Ovary (tissue), 10 donors: ENCODE measurements at regions of chr2 and their contacts with region 1.

Region 1: GRCh38 chr2:100104718-100105677 is 37.4 kb downstream of the AFF3 start:
- DNase-seq: peak; percentile 31 to 68 (median 50)
- H3K4me3 ChIP-seq: peak overlapping the region; percentile 73
- H3K27ac ChIP-seq: peak overlapping the region; percentile 67 to 71
- H3K4me1 ChIP-seq: peaks cover 7% of the 10 kb centered on the region
- H3K27me3 ChIP-seq: no peaks in the 10 kb centered on the region
- CTCF ChIP-seq: no peak
- EP300 ChIP-seq: no peak
- POLR2A ChIP-seq: no peak

Region 2: GRCh38 chr2:98586551-98587140 is 1518.4 kb before region 1 on chr2:
- intact Hi-C with region 1: no loop called
- DNase-seq: no peak
- H3K4me3 ChIP-seq: no peak overlapping the region
- H3K27ac ChIP-seq: no peak overlapping the region
- H3K4me1 ChIP-seq: no peaks in the 10 kb centered on the region
- H3K27me3 ChIP-seq: no peaks in the 10 kb centered on the region
- CTCF ChIP-seq: no peak
- EP300 ChIP-seq: no peak
- POLR2A ChIP-seq: no peak

Region 3: DNA sequence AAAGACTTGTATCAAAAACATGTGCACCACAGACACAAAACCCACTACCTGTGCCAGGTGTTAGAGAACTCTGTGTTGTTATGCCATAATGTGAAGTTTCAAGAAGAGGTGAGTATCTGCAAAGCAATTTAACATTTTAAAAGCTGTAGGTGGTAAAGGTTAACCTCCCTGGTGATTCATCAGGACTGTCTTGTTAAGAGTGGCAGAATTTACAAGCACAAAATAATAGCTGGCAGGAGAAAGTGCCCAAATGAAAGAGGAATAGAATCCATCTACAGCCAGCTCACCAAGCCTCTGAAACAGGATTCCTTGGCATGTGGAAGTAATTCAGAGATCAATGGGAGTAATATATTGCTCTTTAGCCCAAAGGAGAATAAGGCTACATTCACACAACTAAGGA is 193.3 kb before region 1 on chr2:
- intact Hi-C with region 1: no loop called
- DNase-seq: no peak
- H3K4me3 ChIP-seq: no peak overlapping the region
- H3K27ac ChIP-seq: no peak overlapping the region
- H3K4me1 ChIP-seq: no peaks in the 10 kb centered on the region
- H3K27me3 ChIP-seq: no peaks in the 10 kb centered on the region
- CTCF ChIP-seq: no peak
- EP300 ChIP-seq: no peak
- POLR2A ChIP-seq: no peak

Region 4: DNA sequence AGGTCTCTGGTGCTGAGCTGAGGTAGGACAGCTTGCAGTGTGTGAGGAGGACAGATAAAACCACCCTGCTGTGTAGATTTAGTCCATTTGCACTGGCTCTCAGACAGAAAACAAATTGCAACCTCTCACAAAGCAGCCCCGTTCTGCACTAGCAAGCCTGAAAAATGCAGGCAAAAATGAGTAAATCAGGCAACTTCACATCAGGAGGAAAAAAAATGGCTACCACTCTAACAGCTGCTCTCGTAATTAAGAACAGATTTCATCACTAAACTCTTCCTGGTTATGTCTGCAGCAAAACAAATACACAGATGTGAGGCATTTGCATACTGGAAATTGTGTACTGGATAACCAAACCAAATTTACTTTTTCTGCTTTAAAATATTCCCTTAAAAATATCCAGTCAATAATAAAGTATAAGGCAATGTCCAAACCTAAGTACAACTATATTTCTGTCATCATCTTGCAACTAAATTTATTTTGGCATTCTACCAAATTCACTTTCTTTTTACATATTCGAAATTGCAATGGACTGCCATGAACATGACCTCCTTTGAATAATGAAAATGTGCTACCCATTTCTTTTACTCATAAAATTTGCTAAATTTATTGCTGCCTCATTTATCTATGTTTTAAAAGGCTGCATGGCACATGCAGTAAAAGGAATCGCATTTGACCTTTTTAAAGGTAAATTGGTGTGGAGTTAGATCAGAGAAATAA is 120.0 kb before region 1 on chr2:
- intact Hi-C with region 1: no loop called
- DNase-seq: no peak
- H3K4me3 ChIP-seq: no peak overlapping the region
- H3K27ac ChIP-seq: no peak overlapping the region
- H3K4me1 ChIP-seq: peaks cover 8% of the 10 kb centered on the region
- H3K27me3 ChIP-seq: no peaks in the 10 kb centered on the region
- CTCF ChIP-seq: no peak
- EP300 ChIP-seq: no peak
- POLR2A ChIP-seq: no peak

Region 5: DNA sequence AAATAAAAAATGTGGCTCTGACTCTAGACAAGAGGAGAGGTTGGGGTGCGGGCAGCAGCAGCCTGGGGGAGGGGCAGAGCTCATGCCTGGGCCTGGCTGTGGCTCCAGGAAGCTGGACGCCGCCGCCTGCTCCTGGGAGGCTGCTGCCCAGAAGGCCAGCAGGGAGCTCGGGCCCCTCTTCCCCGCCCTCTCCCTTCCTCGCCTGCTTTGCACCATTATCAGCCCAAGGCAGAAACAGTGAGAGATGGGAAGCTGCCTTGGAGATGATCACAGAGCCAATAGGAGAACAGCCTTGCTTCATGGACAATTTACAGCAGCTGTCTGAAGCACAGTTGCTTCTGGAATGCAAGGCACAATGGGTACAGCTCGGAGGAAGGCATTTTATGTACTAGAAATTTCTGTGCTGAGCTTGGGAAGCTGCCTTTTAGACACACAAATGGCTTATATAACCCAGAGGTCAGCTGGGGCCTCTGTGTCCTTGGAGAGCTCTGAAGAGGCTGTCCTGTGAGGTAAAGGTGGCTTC is 92.7 kb after region 1 on chr2:
- intact Hi-C with region 1: loop called in 1 of 4 experiments (anchors 10 kb)
- DNase-seq: peak; percentile 73 to 88 (median 84)
- H3K4me3 ChIP-seq: no peak overlapping the region
- H3K27ac ChIP-seq: peak overlapping the region; percentile 80 to 83
- H3K4me1 ChIP-seq: peaks cover 8% of the 10 kb centered on the region
- H3K27me3 ChIP-seq: no peaks in the 10 kb centered on the region
- CTCF ChIP-seq: no peak
- EP300 ChIP-seq: no peak
- POLR2A ChIP-seq: no peak

Region 6: GRCh38 chr2:100453853-100454252 is 348.9 kb after region 1 on chr2:
- intact Hi-C with region 1: no loop called
- DNase-seq: no peak
- H3K4me3 ChIP-seq: no peak overlapping the region
- H3K27ac ChIP-seq: no peak overlapping the region
- H3K4me1 ChIP-seq: no peaks in the 10 kb centered on the region
- H3K27me3 ChIP-seq: no peaks in the 10 kb centered on the region
- CTCF ChIP-seq: no peak
- EP300 ChIP-seq: no peak
- POLR2A ChIP-seq: no peak